ENCODE measurements at regions of chr12 and their contacts with region 1.

Region 1: GRCh38 chr12:94532490-94533422 is 73.1 kb upstream of the CEP83 start:
- DNase-seq: peak; percentile 44 to 92
- H3K4me3 ChIP-seq: no peak overlapping the region
- CTCF ChIP-seq: peak in 1 of 3 donors; percentile 47
- POLR2A ChIP-seq: no peak

Region 2: DNA sequence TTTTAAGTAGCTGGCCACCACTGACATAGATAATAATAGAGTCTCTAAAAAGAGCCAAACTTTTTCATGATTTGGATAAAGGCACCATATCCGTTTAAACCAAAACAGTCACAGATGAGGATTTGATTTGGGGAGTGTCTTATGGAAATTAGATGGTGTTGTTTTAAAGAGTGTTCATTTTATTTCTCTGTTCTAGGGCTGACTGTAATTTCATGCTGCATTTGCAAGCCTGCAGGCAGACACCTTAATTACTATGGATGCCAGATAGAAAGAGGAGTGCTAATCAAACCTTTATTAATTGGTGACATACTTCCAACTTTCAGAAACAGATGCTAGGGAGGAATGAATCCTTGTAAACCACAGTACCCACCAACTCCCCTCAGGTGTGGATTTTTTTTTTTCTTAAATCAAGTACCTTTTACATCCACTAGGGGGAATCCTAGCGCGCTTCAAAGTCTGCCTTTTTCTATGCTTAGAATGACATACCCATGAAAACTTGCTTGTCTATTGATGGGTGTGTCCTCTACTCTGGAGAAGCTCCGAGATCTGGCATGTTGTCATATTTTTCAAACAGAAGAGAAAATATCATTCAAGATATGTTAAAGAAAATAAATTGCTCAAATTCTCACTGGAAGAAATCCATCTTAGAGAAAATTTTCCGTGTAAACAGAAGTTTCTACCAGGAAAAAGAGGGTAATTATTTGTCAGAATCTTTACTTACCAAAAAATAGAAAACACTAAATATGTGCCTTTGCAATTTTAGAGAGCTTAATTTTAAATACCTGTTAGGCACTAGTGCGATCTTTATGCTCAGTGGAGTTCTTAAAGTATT is 398.6 kb before region 1 on chr12:
- intact Hi-C with region 1: loop called (anchors 10 kb)
- DNase-seq: no peak
- H3K4me3 ChIP-seq: no peak overlapping the region
- CTCF ChIP-seq: peak in 1 of 3 donors; percentile 51
- POLR2A ChIP-seq: no peak

Region 3: GRCh38 chr12:94353130-94353529 is 179.6 kb before region 1 on chr12:
- intact Hi-C with region 1: no loop called
- DNase-seq: no peak
- H3K4me3 ChIP-seq: no peak overlapping the region
- CTCF ChIP-seq: no peak
- POLR2A ChIP-seq: no peak

Region 4: DNA sequence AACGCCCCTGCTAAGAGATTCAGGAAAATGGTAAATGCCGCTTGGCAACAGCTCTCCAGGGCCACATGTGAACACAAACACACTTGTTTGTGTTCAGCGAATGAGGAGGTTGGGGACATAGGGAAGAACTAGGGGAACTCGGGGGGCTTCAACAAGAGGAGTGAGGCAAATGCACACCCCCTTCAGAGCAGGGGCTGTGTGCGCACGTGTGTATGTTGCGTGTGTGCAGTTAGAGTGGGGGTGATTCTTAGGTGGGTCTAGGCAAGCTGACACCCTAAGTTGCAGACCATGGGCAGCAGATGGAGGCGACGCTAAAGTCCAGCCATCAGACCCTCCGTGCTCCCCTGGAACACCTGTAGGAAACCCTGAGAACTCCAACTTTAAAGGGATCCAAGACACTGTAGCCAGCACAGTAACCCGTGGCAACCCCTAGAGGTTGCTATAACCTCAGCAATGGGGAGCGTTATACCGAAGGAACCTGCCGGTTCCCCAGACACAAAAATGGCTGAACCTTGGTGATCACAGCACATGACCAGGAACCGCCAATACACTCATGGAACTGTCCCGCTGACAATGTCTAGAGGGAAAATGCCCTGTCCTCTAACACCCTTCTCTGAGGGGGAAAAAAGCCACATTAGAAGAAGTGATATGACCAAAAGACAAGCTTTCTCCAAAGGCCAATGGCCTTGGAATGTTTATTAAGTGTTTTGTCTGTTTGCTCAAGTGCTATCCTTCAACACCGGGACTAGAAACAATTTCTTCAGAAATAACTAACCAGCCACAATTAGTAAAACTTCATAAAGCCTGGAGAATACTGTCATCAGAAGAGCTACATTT is 13.4 kb after region 1 on chr12:
- intact Hi-C with region 1: no loop called
- DNase-seq: no peak
- H3K4me3 ChIP-seq: no peak overlapping the region
- CTCF ChIP-seq: no peak
- POLR2A ChIP-seq: no peak

Measured in lower leg skin (tissue), 4 donors.